WTC11 (cell line): ENCODE measurements at regions of chr2 and their contacts with region 1.

Region 1: DNA sequence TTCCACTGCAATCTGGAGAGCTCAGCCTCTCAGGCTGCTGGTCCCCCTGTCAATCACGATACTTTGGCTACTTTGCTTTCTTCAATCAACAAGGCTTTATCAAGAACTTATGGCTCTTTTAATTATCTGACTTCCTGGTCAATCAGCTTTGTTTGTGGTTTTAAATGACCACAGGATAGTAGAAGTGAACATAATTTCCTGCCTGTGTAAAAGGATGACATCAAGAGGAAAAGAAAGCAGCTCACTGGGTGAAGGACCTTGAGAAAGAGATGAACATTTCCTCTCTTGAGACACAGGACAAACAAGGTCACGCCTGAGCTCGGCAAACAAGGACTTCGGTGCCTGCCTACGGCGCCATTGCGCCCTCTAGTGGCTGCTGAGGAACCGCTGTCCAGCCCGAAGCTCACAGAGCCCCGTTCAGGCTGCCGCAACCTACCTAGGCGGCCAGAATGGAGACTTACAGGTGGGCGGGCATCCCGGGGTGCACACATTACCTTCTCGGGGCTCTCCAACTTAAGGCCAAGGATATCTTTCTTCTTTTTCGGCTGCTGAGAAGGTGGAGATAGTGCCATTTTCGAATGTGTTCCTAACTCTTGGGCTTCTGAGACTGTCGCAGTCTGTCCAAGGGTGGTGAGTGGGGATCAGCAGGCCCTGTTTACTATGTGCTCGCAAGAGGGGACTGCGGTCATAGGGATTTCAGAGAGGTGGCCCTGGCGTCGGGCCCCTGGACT is 54.0 kb downstream of the IL1RL2 start:
- DNase-seq: peak; percentile 91
- ATAC-seq: peak; percentile 92
- H3K4me3 Mint-ChIP-seq: no peak overlapping the region
- H3K27ac Mint-ChIP-seq: no peak overlapping the region
- H3K4me1 Mint-ChIP-seq: peaks cover 20% of the 10 kb centered on the region
- H3K27me3 Mint-ChIP-seq: no peaks in the 10 kb centered on the region
- CTCF ChIP-seq: peak; percentile 94

Region 2: DNA sequence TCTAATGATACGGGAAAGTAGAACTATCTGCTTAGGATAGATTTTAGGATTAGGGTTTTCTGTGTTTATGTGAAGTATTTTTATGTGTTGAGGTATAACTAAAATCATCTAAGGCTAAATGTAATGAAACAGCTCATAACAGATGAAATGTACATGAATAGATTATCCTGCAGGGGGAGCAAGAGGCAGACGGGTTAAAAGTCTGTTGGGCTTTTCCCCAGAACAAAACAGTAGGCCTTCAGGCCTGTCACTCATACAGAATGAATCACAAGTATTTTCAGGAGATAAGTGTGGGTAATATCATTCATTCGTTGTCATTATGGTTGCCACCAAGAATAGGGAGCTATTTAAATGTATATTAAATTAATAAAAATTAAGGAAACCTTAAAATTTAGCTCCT is 356.9 kb before region 1 on chr2:
- CTCF ChIA-PET with region 1: interaction called, 16 read pairs
- POLR2A ChIA-PET with region 1: no interaction called
- DNase-seq: no peak
- ATAC-seq: peak; percentile 44; the same call in 1 of the 2 replicates
- H3K4me3 Mint-ChIP-seq: no peak overlapping the region
- H3K27ac Mint-ChIP-seq: no peak overlapping the region
- H3K4me1 Mint-ChIP-seq: no peaks in the 10 kb centered on the region
- H3K27me3 Mint-ChIP-seq: no peaks in the 10 kb centered on the region
- CTCF ChIP-seq: peak; percentile 40; the same call in 1 of the 2 replicates

Region 3: DNA sequence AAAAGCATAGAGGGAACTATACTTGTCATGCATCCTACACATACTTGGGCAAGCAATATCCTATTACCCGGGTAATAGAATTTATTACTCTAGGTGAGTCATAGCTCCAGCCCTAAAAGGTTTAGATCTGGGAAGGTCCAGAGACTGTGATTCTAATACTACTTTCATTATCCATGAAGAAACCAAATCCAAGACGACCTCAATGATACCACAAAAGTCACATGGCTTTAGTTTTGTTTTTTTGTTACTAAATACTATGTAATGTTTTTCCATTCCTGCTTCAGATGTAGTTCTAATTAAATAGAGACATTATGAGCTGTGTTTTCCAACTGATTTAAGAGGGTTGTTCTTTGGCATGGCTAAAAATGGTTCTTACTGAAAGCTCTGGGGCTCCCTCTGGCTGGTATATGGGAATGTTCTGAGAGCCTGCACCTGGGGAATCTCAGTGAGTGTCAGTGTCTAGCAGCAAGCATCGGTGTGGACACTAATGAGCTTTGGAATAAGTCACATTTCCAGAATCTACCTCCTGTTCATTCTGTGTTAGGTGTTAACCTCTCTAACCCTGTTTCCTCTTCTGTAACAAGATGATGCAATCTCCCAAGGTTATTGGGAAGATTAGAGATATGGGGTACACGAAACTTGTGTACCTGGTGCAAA is 74.5 kb before region 1 on chr2:
- CTCF ChIA-PET with region 1: interaction called, 18 read pairs
- POLR2A ChIA-PET with region 1: no interaction called
- DNase-seq: no peak
- ATAC-seq: peak; percentile 85
- H3K4me3 Mint-ChIP-seq: no peak overlapping the region
- H3K27ac Mint-ChIP-seq: no peak overlapping the region
- H3K4me1 Mint-ChIP-seq: peaks cover 1% of the 10 kb centered on the region
- H3K27me3 Mint-ChIP-seq: no peaks in the 10 kb centered on the region
- CTCF ChIP-seq: no peak

Region 4: GRCh38 chr2:102230410-102230909 is 10.3 kb before region 1 on chr2:
- CTCF ChIA-PET with region 1: interaction called, 14 read pairs
- POLR2A ChIA-PET with region 1: no interaction called
- DNase-seq: no peak
- ATAC-seq: no peak
- H3K4me3 Mint-ChIP-seq: no peak overlapping the region
- H3K27ac Mint-ChIP-seq: no peak overlapping the region
- H3K4me1 Mint-ChIP-seq: peaks cover 16% of the 10 kb centered on the region
- H3K27me3 Mint-ChIP-seq: no peaks in the 10 kb centered on the region
- CTCF ChIP-seq: no peak

Region 5: DNA sequence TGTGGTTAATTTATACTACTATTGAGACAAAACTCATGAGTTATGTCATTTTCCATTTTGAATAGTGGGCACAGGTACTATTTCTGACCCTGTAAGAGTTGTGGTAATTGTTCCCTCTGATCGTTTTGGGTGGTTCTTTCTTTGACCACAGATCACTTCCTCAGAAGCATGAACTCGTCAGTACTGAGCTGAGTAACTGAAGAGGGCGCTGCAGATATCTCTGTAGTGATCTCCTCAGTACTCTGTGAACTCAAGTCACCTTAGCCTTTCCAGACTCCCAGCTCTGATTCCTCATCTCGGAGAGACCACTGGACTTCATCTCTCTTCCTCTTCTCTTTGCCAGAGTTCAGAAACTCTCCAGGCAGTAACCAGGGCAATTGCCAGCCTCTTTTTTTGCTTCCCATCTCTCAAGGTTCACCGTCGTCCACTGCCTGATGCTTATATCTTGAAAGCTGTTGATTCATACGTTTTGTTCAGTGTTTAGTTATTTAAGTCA is 61.1 kb after region 1 on chr2:
- CTCF ChIA-PET with region 1: interaction called, 10 read pairs
- POLR2A ChIA-PET with region 1: no interaction called
- DNase-seq: peak; percentile 47
- ATAC-seq: peak; percentile 100
- H3K4me3 Mint-ChIP-seq: no peak overlapping the region
- H3K27ac Mint-ChIP-seq: no peak overlapping the region
- H3K4me1 Mint-ChIP-seq: no peaks in the 10 kb centered on the region
- H3K27me3 Mint-ChIP-seq: no peaks in the 10 kb centered on the region; the same call in 1 of the 2 replicates
- CTCF ChIP-seq: no peak

Region 6: GRCh38 chr2:102449370-102449974 is 208.7 kb after region 1 on chr2:
- CTCF ChIA-PET with region 1: interaction called, 23 read pairs
- POLR2A ChIA-PET with region 1: no interaction called
- DNase-seq: peak; percentile 51
- ATAC-seq: no peak
- H3K4me3 Mint-ChIP-seq: no peak overlapping the region
- H3K27ac Mint-ChIP-seq: no peak overlapping the region
- H3K4me1 Mint-ChIP-seq: no peaks in the 10 kb centered on the region
- H3K27me3 Mint-ChIP-seq: no peaks in the 10 kb centered on the region
- CTCF ChIP-seq: no peak